CD14-positive monocyte (primary cell): ENCODE measurements at regions of chr17 and their contacts with region 1.

Region 1: DNA sequence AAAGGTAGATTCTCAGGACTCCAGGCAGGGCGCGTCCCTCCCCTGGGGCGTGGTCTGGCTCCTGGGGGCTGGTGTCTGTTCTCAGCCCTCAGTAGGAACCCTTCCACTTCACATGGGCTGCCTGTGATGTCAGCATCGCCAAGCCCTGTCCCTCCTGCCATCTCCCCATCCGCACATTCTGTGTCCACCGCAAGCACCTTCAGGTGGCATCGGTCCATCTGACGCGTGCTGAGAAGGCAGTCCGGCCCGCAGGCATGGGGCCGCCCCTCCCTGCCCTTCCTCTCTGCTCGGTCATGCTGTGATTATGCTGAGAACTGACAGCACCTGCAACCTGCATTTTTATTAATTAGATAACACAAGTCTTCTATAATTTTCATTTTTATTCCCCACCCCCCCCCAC is 12.7 kb upstream of the DNAH17 start:
- DNase-seq: no peak
- H3K4me3 ChIP-seq: no peak overlapping the region
- H3K4me3 Mint-ChIP-seq: no peak overlapping the region
- H3K27ac ChIP-seq: no peak overlapping the region
- H3K27ac Mint-ChIP-seq: peak overlapping the region in 2 of 7 donors; percentile 43 to 46
- H3K4me1 ChIP-seq: peaks cover 51 to 58% of the 10 kb centered on the region in 2 donors
- H3K4me1 Mint-ChIP-seq: peaks cover 58% of the 10 kb centered on the region
- H3K27me3 ChIP-seq: no peaks in the 10 kb centered on the region
- H3K27me3 Mint-ChIP-seq: peaks cover 2 to 11% (median 4%) of the 10 kb centered on the region in 3 donors
- CTCF ChIP-seq: no peak

Region 2: GRCh38 chr17:78442648-78443128 is 147.2 kb before region 1 on chr17:
- intact Hi-C with region 1: loop called in 1 of 2 experiments (anchors 5 kb)
- DNase-seq: peak; percentile 99 to 100 (median 99)
- H3K4me3 ChIP-seq: no peak overlapping the region
- H3K4me3 Mint-ChIP-seq: peak overlapping the region in 1 of 2 donors; percentile 35
- H3K27ac ChIP-seq: peak overlapping the region; percentile 89 to 95
- H3K27ac Mint-ChIP-seq: peak overlapping the region; percentile 94 to 98 (median 97)
- H3K4me1 ChIP-seq: peaks cover 28 to 33% of the 10 kb centered on the region in 2 donors
- H3K4me1 Mint-ChIP-seq: peaks cover 30% of the 10 kb centered on the region
- H3K27me3 ChIP-seq: no peaks in the 10 kb centered on the region
- H3K27me3 Mint-ChIP-seq: peaks cover 0 to 6% (median 3%) of the 10 kb centered on the region in 3 donors
- CTCF ChIP-seq: no peak

Region 3: GRCh38 chr17:78535273-78536197 is 54.4 kb before region 1 on chr17:
- intact Hi-C with region 1: loop called in 1 of 2 experiments (anchors 5 kb)
- DNase-seq: no peak
- H3K4me3 ChIP-seq: no peak overlapping the region
- H3K4me3 Mint-ChIP-seq: no peak overlapping the region
- H3K27ac ChIP-seq: no peak overlapping the region
- H3K27ac Mint-ChIP-seq: peak overlapping the region in 2 of 7 donors; percentile 16 to 22
- H3K4me1 ChIP-seq: peaks cover 8 to 9% of the 10 kb centered on the region in 2 donors
- H3K4me1 Mint-ChIP-seq: peaks cover 28% of the 10 kb centered on the region
- H3K27me3 ChIP-seq: no peaks in the 10 kb centered on the region
- H3K27me3 Mint-ChIP-seq: peaks cover 0 to 11% (median 5%) of the 10 kb centered on the region in 3 donors
- CTCF ChIP-seq: no peak

Region 4: GRCh38 chr17:78557598-78558039 is 32.3 kb before region 1 on chr17:
- intact Hi-C with region 1: loop called in 1 of 2 experiments (anchors 5 kb)
- DNase-seq: peak in 2 of 3 donors; percentile 46 to 60
- H3K4me3 ChIP-seq: no peak overlapping the region
- H3K4me3 Mint-ChIP-seq: no peak overlapping the region
- H3K27ac ChIP-seq: no peak overlapping the region
- H3K27ac Mint-ChIP-seq: no peak overlapping the region
- H3K4me1 ChIP-seq: no peaks in the 10 kb centered on the region
- H3K4me1 Mint-ChIP-seq: no peaks in the 10 kb centered on the region
- H3K27me3 ChIP-seq: no peaks in the 10 kb centered on the region
- H3K27me3 Mint-ChIP-seq: peaks cover 2 to 5% (median 3%) of the 10 kb centered on the region in 3 donors
- CTCF ChIP-seq: no peak